ENCODE measurements at regions of chr3 and their contacts with region 1.

Region 1: DNA sequence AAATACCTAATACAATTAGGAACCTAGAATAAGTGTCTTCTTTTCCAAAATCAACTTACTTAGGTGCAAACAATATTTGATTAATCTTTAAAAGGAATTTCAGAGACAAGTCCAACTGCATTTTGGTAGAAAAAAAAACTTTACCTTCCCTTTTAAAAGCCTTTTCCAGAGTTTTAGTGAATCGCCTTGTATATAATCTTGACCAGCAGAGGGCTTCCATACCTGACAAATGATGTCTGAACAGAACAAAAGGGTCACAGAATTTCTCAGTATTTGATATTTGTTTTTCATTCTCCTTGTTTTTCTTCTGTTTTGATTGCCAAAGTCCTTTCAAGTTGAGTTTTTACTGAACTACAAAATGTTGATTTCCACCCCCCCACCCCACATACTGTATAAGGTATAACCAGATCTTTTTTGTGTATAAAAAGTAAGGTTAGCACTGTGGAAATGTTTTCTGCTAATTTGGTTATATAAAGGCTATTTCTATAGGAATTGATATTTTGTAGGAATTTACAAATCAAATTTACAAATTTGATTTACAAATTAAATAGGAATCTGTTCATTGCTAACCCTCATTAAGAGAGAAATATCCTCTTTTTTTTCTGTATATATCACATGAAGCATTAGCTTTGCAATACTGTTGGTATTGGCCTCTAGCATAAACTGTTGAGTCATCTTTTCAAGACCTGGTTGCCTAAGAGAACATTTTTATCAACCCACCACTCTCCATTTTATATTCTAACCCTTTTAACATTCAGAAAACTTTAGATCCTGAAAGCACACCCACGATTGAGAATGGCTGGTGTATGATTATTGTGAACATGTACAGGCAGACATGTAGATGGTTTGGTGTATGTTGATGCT is 464.1 kb upstream of the RARB start:
- DNase-seq: no peak
- ATAC-seq: no peak
- H3K4me3 ChIP-seq: no peak overlapping the region
- H3K4me3 Mint-ChIP-seq: no peak overlapping the region
- H3K27ac ChIP-seq: no peak overlapping the region
- H3K27ac Mint-ChIP-seq: no peak overlapping the region
- H3K4me1 ChIP-seq: no peaks in the 10 kb centered on the region
- H3K4me1 Mint-ChIP-seq: no peaks in the 10 kb centered on the region
- H3K27me3 ChIP-seq: no peaks in the 10 kb centered on the region
- H3K27me3 Mint-ChIP-seq: no peaks in the 10 kb centered on the region

Region 2: GRCh38 chr3:25044762-25045710 is 81.0 kb after region 1 on chr3:
- CTCF ChIA-PET with region 1: no interaction called
- POLR2A ChIA-PET with region 1: no interaction called
- DNase-seq: no peak
- ATAC-seq: no peak
- H3K4me3 ChIP-seq: no peak overlapping the region
- H3K4me3 Mint-ChIP-seq: no peak overlapping the region
- H3K27ac ChIP-seq: no peak overlapping the region
- H3K27ac Mint-ChIP-seq: no peak overlapping the region
- H3K4me1 ChIP-seq: no peaks in the 10 kb centered on the region
- H3K4me1 Mint-ChIP-seq: no peaks in the 10 kb centered on the region
- H3K27me3 ChIP-seq: no peaks in the 10 kb centered on the region
- H3K27me3 Mint-ChIP-seq: no peaks in the 10 kb centered on the region

Region 3: DNA sequence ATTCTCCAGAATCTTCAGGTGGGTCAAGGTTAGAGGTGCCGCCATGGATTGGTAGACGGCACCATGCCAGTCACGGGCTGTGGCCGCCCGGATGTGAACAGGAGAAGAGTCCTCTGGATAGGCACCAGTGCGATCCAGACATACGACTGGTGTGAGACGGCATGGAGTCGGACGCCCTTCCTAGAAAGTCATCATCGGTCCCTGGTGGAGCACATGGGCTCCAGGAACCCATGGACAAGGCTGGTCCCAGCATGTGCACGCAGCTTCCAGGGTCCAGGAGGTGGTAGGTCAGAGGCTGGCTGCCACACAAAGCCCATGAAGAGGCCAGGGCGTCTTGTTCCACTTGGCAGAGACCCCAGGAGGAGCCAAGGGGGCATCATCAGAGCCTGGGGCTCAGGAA is 1382.5 kb after region 1 on chr3:
- CTCF ChIA-PET with region 1: interaction called in 1 of 2 experiments, 14 read pairs
- POLR2A ChIA-PET with region 1: no interaction called
- DNase-seq: no peak
- ATAC-seq: no peak
- H3K4me3 ChIP-seq: no peak overlapping the region
- H3K4me3 Mint-ChIP-seq: no peak overlapping the region
- H3K27ac ChIP-seq: no peak overlapping the region
- H3K27ac Mint-ChIP-seq: no peak overlapping the region
- H3K4me1 ChIP-seq: no peaks in the 10 kb centered on the region
- H3K4me1 Mint-ChIP-seq: no peaks in the 10 kb centered on the region
- H3K27me3 ChIP-seq: no peaks in the 10 kb centered on the region
- H3K27me3 Mint-ChIP-seq: no peaks in the 10 kb centered on the region

Measured in T-cell (primary cell).